ENCODE measurements at regions of chr16 and their contacts with region 1.

Region 1: GRCh38 chr16:68470461-68471150 is 22.3 kb upstream of the SMPD3 start:
- DNase-seq: no peak
- H3K4me3 ChIP-seq: no peak overlapping the region
- H3K27ac ChIP-seq: no peak overlapping the region
- H3K4me1 ChIP-seq: peaks cover 33% of the 10 kb centered on the region
- H3K27me3 ChIP-seq: no peaks in the 10 kb centered on the region
- CTCF ChIP-seq: no peak

Region 2: DNA sequence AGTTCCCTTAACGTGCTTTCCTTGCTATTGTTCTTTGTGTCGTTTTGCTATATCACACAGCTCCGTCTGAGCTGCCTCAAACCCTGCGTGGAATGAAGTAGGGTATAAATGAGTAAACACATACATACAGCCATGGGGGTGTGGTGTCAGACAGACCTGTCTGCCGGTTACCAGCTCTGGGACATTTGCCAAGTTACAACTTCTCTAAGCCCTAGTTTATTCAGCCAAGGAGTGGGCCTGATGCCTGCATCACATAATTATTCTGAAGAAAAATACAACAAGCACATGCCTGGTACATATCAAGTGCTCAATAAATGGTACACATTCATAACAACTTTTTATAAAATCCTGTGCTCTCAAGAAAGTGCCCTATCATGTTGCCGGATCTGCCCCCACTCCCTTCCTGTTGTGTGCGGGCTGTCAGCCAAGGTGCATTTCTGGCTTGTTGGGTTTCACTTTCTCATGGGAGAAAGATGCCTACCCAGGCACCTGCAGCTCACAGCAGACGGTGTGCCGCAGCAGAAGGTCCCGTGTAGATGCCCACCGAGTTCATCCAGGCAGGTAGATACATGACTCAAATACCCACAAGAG is 52.8 kb before region 1 on chr16:
- CTCF ChIA-PET with region 1: no interaction called
- POLR2A ChIA-PET with region 1: interaction called, 13 read pairs
- intact Hi-C with region 1: loop called (anchors 2 kb)
- DNase-seq: peak; percentile 70 to 75
- H3K4me3 ChIP-seq: peak overlapping the region; percentile 33; the same call in 1 of the 2 replicates
- H3K27ac ChIP-seq: peak overlapping the region; percentile 63
- H3K4me1 ChIP-seq: peaks cover 29% of the 10 kb centered on the region
- H3K27me3 ChIP-seq: no peaks in the 10 kb centered on the region
- CTCF ChIP-seq: no peak

Region 3: GRCh38 chr16:68490829-68491575 is 20.4 kb after region 1 on chr16:
- CTCF ChIA-PET with region 1: no interaction called
- POLR2A ChIA-PET with region 1: no interaction called
- intact Hi-C with region 1: loop called (anchors 1 kb)
- DNase-seq: peak; percentile 82 to 89
- H3K4me3 ChIP-seq: no peak overlapping the region
- H3K27ac ChIP-seq: peak overlapping the region; percentile 9; the same call in 1 of the 2 replicates
- H3K4me1 ChIP-seq: peaks cover 38% of the 10 kb centered on the region
- H3K27me3 ChIP-seq: no peaks in the 10 kb centered on the region
- CTCF ChIP-seq: no peak

Region 4: DNA sequence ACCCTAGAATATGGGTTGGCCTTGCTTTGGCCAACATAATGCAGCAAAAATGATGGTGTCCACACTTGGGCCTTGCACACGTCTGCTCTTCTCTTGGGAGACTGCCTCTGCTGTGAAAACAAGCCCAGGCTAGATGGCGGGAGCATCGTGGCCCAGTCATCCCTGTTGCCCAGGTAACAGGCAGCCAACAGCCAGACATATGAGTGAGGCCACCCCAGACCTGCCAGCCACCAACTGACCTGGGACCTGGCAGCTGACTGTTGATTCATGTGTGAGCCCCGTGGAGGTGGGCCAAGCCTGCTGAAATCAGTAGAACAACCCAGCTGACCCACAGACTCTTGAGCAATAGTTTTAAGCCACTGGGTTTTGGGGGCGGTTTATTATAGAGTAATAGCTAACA is 135.1 kb after region 1 on chr16:
- CTCF ChIA-PET with region 1: no interaction called
- POLR2A ChIA-PET with region 1: no interaction called
- intact Hi-C with region 1: no loop called
- DNase-seq: no peak
- H3K4me3 ChIP-seq: no peak overlapping the region
- H3K27ac ChIP-seq: no peak overlapping the region
- H3K4me1 ChIP-seq: no peaks in the 10 kb centered on the region
- H3K27me3 ChIP-seq: no peaks in the 10 kb centered on the region
- CTCF ChIP-seq: no peak